Psoas muscle (tissue), 8 donors: ENCODE measurements at regions of chrX and their contacts with region 1.

Region 1: GRCh38 chrX:124719060-124719459 is 372.7 kb downstream of the SH2D1A start:
- DNase-seq: no peak
- ATAC-seq: no peak
- H3K4me3 ChIP-seq: no peak overlapping the region
- H3K27ac ChIP-seq: no peak overlapping the region
- H3K4me1 ChIP-seq: no peaks in the 10 kb centered on the region
- H3K27me3 ChIP-seq: no peaks in the 10 kb centered on the region
- CTCF ChIP-seq: no peak

Region 2: GRCh38 chrX:124796989-124797388 is 77.9 kb after region 1 on chrX:
- intact Hi-C with region 1: no loop called
- DNase-seq: no peak
- ATAC-seq: no peak
- H3K4me3 ChIP-seq: no peak overlapping the region
- H3K27ac ChIP-seq: no peak overlapping the region
- H3K4me1 ChIP-seq: no peaks in the 10 kb centered on the region
- H3K27me3 ChIP-seq: no peaks in the 10 kb centered on the region
- CTCF ChIP-seq: no peak

Region 3: DNA sequence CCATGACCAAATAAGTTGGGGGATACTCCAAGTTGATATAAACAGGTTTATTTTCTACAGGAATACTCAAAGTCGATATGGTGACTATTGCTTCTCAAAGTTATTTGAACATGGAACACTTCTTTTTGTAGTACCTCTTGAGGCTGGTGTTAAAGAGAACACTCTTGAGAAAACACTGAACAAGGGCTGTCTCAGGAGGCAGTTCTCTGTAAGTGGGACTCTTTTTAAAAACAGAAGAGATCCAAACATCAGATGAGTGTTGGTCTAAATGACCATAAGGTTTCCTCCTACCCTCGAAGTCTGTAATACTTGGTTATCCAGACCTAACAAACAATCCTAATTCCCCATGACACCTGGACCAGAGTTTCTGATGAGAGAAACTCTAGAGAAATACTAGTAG is 377.4 kb after region 1 on chrX:
- intact Hi-C with region 1: loop called in 1 of 2 experiments (anchors 5 kb)
- DNase-seq: no peak
- ATAC-seq: no peak
- H3K4me3 ChIP-seq: no peak overlapping the region
- H3K27ac ChIP-seq: no peak overlapping the region
- H3K4me1 ChIP-seq: no peaks in the 10 kb centered on the region
- H3K27me3 ChIP-seq: no peaks in the 10 kb centered on the region
- CTCF ChIP-seq: no peak